Prostate gland (tissue), 2 donors: ENCODE measurements at regions of chr6 and their contacts with region 1.

Region 1: DNA sequence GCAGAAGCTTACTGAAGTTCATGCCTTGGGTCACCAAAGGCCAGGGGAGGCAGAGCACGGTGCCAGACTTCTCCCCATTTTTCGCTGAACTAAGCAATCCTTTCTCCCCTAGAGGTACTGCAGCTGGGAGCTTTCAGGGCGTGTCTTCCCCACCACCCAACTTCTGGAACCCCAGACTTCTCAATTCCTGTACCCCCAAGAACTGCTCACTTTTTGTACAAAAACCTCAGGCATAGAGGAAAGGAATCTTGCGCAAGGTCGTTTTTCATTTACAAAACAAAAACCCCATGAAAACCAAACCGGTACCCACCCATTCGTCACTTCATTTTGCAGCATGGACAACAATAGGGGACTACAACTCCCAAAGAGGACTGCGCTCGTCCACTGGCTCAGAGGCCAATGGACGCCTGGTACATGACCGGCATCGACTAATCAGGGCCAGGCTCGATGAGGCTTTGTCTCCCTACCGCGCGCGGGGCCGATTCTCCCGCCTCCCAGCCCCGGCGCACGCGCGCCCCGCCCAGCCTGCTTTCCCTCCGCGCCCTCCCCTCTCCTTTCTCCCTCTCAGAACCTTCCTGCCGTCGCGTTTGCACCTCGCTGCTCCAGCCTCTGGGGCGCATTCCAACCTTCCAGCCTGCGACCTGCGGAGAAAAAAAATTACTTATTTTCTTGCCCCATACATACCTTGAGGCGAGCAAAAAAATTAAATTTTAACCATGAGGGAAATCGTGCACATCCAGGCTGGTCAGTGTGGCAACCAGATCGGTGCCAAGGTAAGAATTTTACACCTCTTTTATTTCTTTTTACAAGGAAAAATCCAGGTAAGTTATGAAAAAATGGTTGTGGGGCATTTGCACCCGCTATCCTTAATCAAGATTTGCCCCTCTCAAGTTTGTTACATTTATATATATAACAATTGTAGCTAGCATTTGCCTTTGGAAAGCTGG is at the start of gene TUBB:
- DNase-seq: peak; percentile 98
- H3K4me3 ChIP-seq: peak within 1 kb of the TSS; percentile 60 to 88
- H3K27ac ChIP-seq: peak within 1 kb of the TSS; percentile 88 to 96
- H3K4me1 ChIP-seq: peaks cover 9% of the 10 kb centered on the region
- H3K27me3 ChIP-seq: no peaks in the 10 kb centered on the region
- CTCF ChIP-seq: peak in 2 of 4 experiments; percentile 30 to 37
- POLR2A ChIP-seq: peak; percentile 95
- total RNA-seq, gene TUBB: 196 to 270 TPM

Region 2: GRCh38 chr6:30556066-30556905 is 163.8 kb before region 1 on chr6 and contains the start of gene GNL1:
- intact Hi-C with region 1: loop called (anchors 5 kb)
- DNase-seq: peak; percentile 96
- H3K4me3 ChIP-seq: peak within 1 kb of the TSS; percentile 87 to 94
- H3K27ac ChIP-seq: peak within 1 kb of the TSS; percentile 97 to 99
- H3K4me1 ChIP-seq: no peaks in the 10 kb centered on the region
- H3K27me3 ChIP-seq: no peaks in the 10 kb centered on the region
- CTCF ChIP-seq: peak in 2 of 4 experiments; percentile 28 to 64
- POLR2A ChIP-seq: peak; percentile 59
- total RNA-seq, gene GNL1: 38.3 to 56.4 TPM

Region 3: DNA sequence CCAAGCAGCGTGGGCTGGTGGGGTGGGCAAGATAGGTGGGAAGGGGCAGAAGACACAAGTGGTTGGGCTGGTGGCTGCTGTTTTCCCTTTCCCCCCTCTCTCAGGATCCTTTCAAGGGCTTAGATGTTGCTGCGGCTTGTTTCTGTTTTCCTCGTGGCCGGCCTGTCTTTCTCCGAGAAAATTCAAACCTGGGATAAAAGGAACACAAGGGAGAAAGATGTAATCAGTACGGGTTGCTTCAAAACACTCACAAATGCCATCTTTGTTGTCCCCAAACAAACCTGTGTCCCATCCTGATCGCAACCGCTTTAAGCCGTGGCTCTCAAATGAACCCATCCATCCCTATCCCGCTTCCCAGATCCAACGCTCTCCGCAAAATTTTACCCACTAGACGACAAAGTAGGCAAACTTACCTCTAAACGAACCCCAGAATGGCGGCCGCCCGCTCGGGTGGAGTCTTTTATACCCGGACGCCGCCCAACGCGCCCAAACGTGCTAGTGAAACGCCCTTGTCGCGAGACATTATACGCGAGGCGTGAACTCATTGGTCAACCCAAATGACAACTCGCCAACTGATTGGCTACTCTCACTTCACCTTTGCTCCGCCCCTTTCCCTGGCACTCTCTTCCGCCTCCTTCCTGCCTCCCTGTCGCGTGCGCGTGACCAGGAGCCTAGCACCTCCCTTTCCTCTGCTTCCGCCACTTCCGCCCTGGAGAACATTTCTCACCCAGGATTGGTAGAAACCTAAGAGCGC is 103.1 kb before region 1 on chr6 and contains the start of gene PPP1R10:
- intact Hi-C with region 1: loop called (anchors 2 kb)
- DNase-seq: peak; percentile 99
- H3K4me3 ChIP-seq: peak within 1 kb of the TSS; percentile 54 to 89
- H3K27ac ChIP-seq: peak within 1 kb of the TSS; percentile 95 to 99
- H3K4me1 ChIP-seq: peaks cover 5% of the 10 kb centered on the region
- H3K27me3 ChIP-seq: no peaks in the 10 kb centered on the region
- CTCF ChIP-seq: no peak
- POLR2A ChIP-seq: peak; percentile 97
- total RNA-seq, gene PPP1R10: 40.0 to 51.0 TPM

Region 4: GRCh38 chr6:30678964-30679726 is 40.9 kb before region 1 on chr6:
- intact Hi-C with region 1: loop called (anchors 1 kb)
- DNase-seq: peak; percentile 78
- H3K4me3 ChIP-seq: no peak overlapping the region
- H3K27ac ChIP-seq: peak overlapping the region in 1 of 2 donors; percentile 43
- H3K4me1 ChIP-seq: peaks cover 2% of the 10 kb centered on the region
- H3K27me3 ChIP-seq: no peaks in the 10 kb centered on the region
- CTCF ChIP-seq: peak; percentile 86 to 98 (median 98)
- POLR2A ChIP-seq: no peak

Region 5: GRCh38 chr6:30686908-30687658 is 33.0 kb before region 1 on chr6:
- intact Hi-C with region 1: loop called (anchors 2 kb)
- DNase-seq: peak; percentile 76
- H3K4me3 ChIP-seq: peak overlapping the region; percentile 66 to 88
- H3K27ac ChIP-seq: peak overlapping the region; percentile 92 to 97
- H3K4me1 ChIP-seq: peaks cover 4% of the 10 kb centered on the region
- H3K27me3 ChIP-seq: no peaks in the 10 kb centered on the region
- CTCF ChIP-seq: no peak
- POLR2A ChIP-seq: peak; percentile 63

Region 6: DNA sequence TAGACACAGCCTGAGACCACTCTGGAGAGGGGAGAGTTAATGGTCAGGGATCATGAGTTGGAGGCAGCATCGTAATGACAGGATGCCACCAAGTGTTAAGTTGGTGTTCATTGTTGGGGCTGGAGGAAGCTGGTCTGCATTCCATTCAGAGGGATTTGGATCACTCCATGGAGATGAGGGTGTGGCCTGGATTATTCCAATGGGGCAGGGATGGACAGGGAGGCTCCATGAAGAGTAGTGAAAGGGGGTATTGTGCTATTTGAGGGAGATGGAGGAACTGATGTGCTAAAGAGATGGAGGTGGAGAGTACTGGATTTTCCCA is 1043.5 kb after region 1 on chr6:
- intact Hi-C with region 1: no loop called
- DNase-seq: no peak
- H3K4me3 ChIP-seq: no peak overlapping the region
- H3K27ac ChIP-seq: no peak overlapping the region
- H3K4me1 ChIP-seq: no peaks in the 10 kb centered on the region
- H3K27me3 ChIP-seq: no peaks in the 10 kb centered on the region
- CTCF ChIP-seq: no peak
- POLR2A ChIP-seq: no peak